PC-3 (cell line): ENCODE measurements at regions of chr12 and their contacts with region 1.

Region 1: GRCh38 chr12:84502907-84503787 is 409.5 kb downstream of the SLC6A15 start:
- DNase-seq: peak; percentile 89
- ATAC-seq: peak; percentile 78
- H3K4me3 ChIP-seq: 0 out of 2 replicates have a peak overlapping the region, but pooled peaks have one; percentile 11
- H3K27ac ChIP-seq: peak overlapping the region; percentile 89
- H3K4me1 ChIP-seq: peaks cover 23% of the 10 kb centered on the region
- H3K27me3 ChIP-seq: no peaks in the 10 kb centered on the region
- CTCF ChIP-seq: peak; percentile 90

Region 2: DNA sequence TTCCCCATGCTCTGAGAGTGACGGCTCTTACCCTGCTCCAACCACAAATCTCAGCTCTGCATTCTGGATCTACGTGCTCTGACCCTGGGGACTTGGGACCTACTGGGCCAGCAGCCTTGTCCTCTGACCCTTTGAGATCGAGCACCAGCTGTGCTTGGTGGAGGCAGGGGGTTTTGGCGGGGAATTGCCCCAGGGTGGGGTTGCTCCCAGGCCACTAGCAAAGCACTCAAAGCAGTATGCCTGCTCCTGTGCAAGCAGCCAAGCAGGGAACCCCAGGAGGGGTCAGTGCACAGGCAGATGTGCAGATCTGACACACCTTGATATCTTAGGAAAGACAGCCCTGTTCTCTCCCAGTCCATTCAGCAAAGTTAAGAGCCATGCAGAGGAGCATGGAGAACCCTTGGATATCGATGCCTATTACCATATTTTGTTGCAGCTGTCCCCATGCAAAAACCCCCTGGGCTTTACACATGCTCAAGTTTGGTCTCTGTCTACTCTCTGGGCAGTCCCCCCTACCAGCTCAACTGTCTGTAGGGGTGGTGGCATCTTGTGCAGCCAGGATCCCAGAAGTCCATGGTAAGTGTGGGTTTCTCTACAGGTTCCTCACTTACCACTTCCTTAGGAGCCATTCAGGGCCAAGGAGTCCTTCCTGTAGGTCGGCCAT is 1497.5 kb before region 1 on chr12:
- CTCF ChIA-PET with region 1: no interaction called
- POLR2A ChIA-PET with region 1: no interaction called
- intact Hi-C with region 1: loop called (anchors 5 kb)
- DNase-seq: no peak
- ATAC-seq: no peak
- H3K4me3 ChIP-seq: no peak overlapping the region
- H3K27ac ChIP-seq: no peak overlapping the region
- H3K4me1 ChIP-seq: peaks cover 8% of the 10 kb centered on the region; the same call in 1 of the 2 replicates
- H3K27me3 ChIP-seq: no peaks in the 10 kb centered on the region
- CTCF ChIP-seq: no peak

Region 3: DNA sequence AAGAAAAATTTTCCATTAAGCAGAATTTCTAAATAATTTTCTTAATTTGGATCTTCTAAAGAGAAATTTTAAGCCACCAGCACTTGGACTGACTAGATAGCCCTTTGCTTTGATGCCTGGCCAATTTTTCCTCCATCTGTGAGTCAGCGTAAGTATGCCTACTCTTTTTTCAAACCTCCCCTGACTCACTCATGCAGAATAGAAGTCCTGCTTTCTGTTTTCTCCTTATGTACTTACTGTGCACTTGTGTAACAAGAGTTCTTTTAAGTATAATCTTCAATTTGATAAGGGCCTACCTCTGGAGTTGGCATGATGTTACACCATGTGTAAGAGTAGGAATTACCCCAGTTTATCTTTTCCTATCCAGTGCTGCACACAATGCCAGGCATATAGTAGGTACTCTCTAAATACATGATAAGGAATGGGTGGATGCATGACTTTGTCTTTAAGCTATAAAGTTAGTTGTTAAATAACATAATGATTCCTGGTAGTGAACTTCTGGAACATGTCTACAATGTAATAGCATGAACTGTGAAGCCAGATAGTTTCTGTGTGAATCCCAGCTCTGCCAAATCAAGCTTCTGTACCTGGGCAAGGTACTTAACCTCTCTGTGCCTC is 1486.8 kb before region 1 on chr12:
- CTCF ChIA-PET with region 1: no interaction called
- POLR2A ChIA-PET with region 1: no interaction called
- intact Hi-C with region 1: loop called (anchors 5 kb)
- DNase-seq: peak; percentile 93
- ATAC-seq: peak; percentile 97
- H3K4me3 ChIP-seq: peak overlapping the region; percentile 61; the same call in 1 of the 2 replicates
- H3K27ac ChIP-seq: peak overlapping the region; percentile 20; the same call in 1 of the 2 replicates
- H3K4me1 ChIP-seq: peaks cover 19% of the 10 kb centered on the region
- H3K27me3 ChIP-seq: no peaks in the 10 kb centered on the region
- CTCF ChIP-seq: no peak

Region 4: DNA sequence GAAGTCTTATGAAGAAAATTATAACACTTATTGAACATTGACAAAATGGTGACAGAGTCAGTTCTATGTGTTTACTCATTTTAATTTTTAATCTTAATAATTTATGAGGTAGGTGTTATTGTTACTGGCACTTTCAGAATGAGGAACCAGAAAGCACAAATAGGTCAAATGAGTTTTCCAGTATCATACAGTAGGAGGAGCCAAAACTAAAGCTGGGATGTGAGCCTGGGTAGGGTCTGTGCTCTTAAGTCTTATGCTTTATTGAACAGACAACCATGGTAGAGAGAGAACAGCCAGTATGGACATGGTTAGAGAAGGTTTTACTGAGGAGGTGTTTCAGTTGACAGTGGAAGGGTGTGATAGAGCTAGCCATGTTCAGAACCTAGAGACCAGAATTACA is 1040.7 kb before region 1 on chr12:
- CTCF ChIA-PET with region 1: no interaction called
- POLR2A ChIA-PET with region 1: no interaction called
- intact Hi-C with region 1: loop called (anchors 10 kb)
- DNase-seq: peak; percentile 31
- ATAC-seq: no peak
- H3K4me3 ChIP-seq: no peak overlapping the region
- H3K27ac ChIP-seq: no peak overlapping the region
- H3K4me1 ChIP-seq: no peaks in the 10 kb centered on the region
- H3K27me3 ChIP-seq: no peaks in the 10 kb centered on the region
- CTCF ChIP-seq: peak; percentile 46; the same call in 1 of the 2 replicates

Region 5: GRCh38 chr12:83823431-83823963 is 679.6 kb before region 1 on chr12:
- CTCF ChIA-PET with region 1: no interaction called
- POLR2A ChIA-PET with region 1: no interaction called
- intact Hi-C with region 1: loop called (anchors 10 kb)
- DNase-seq: peak; percentile 64
- ATAC-seq: peak; percentile 46; the same call in 1 of the 2 replicates
- H3K4me3 ChIP-seq: no peak overlapping the region
- H3K27ac ChIP-seq: no peak overlapping the region
- H3K4me1 ChIP-seq: peaks cover 10% of the 10 kb centered on the region
- H3K27me3 ChIP-seq: no peaks in the 10 kb centered on the region
- CTCF ChIP-seq: peak; percentile 76